ENCODE measurements at regions of chrX and their contacts with region 1.

Region 1: DNA sequence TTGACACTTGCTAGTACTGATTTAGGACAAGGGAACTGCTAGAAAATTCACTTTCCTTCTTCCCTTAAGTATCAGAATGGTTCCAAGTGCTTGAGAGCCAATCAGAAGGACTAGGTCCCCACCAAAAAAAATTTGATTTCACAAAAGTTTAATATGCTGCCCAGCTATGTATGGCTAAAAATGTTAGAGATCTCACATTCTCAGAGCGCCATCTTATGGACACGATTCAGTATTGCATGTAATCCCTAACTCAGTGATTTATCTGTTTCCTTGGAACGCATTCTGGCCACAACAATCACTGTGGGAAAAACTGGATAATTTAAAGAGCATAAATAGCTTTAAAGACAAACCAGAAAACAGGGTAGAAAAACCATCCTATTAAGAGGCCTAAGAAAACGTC is 255.1 kb upstream of the GPC4 start:
- DNase-seq: no peak

Region 2: GRCh38 chrX:132968296-132968949 is 702.0 kb before region 1 on chrX:
- intact Hi-C with region 1: loop called (anchors 10 kb)
- DNase-seq: no peak

Region 3: DNA sequence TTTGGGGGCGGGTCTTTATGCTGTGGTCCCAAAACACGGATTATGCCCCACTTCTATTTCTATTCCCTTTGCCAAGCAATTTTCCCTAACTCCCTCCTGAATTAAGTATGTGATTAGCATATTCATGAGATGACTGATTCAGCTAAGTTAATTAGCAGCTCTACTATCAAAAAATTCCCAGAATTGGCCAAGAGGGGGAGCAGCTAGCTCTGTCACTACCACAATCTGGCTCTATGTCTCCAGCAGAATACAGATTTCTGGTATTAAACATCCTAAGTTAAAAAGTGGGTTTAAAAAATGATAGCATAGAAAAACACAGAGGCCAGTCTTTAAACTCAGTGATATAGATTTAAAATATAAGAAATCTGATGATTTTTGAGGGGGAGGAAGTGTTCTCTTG is 335.4 kb before region 1 on chrX:
- intact Hi-C with region 1: loop called (anchors 5 kb)
- DNase-seq: no peak

Measured in cardiac septum (tissue), 1 donor.